ENCODE measurements at regions of chr1 and their contacts with region 1.

Region 1: DNA sequence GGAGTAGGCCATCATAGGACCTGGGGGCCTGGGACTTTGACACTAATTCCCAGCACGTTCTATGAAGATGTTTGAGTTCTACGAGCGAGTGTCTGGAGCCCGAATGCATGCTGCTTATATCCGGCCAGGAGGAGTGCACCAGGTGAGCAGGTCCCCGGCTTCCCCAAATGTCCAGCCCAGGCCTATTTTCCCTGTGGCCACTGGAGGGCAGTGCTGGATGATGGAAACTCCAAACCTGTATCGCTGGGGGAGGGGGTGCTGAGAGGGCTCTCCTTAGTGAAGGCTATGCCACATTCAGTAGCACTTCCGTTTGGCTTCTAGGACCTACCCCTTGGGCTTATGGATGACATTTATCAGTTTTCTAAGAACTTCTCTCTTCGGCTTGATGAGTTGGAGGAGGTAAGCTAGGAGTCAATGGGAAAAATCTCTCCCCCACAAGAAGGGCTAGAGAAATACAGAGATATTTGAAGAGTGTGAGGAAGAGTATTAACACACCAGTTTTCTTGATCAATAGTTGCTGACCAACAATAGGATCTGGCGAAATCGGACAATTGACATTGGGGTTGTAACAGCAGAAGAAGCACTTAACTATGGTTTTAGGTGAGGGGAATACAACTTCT is 5.2 kb upstream of the FCER1G start:
- DNase-seq: peak; percentile 89
- H3K4me3 ChIP-seq: no peak overlapping the region
- H3K27ac ChIP-seq: peak overlapping the region; percentile 46 to 96 (median 74)
- H3K4me1 ChIP-seq: peaks cover 0 to 36% (median 21%) of the 10 kb centered on the region in 4 donors
- H3K27me3 ChIP-seq: no peaks in the 10 kb centered on the region
- CTCF ChIP-seq: peak; percentile 72 to 94 (median 87)
- EP300 ChIP-seq: no peak
- POLR2A ChIP-seq: no peak

Region 2: DNA sequence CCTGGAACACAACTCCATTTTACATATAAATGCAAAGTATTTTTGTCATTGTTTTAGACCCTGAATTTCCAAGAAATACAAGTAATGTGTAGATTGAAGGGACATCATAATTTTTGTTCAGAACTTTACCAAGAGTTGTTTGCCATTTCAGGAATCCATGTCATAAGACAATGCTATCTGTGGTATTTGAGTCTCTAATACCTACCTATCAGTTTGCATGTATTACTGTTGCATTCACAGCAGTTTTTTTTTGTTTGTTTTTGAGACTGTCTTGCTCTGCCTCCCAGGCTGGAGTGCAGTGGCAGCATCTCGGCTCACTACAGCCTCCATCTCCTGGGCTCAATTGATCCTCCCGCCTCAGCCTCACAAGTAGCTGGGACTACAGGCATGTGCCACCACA is 82.7 kb after region 1 on chr1:
- intact Hi-C with region 1: loop called (anchors 5 kb)
- DNase-seq: no peak
- H3K4me3 ChIP-seq: no peak overlapping the region
- H3K27ac ChIP-seq: no peak overlapping the region
- H3K4me1 ChIP-seq: no peaks in the 10 kb centered on the region
- H3K27me3 ChIP-seq: no peaks in the 10 kb centered on the region
- CTCF ChIP-seq: no peak
- EP300 ChIP-seq: no peak
- POLR2A ChIP-seq: no peak